ENCODE measurements at regions of chr17 and their contacts with region 1.

Region 1: DNA sequence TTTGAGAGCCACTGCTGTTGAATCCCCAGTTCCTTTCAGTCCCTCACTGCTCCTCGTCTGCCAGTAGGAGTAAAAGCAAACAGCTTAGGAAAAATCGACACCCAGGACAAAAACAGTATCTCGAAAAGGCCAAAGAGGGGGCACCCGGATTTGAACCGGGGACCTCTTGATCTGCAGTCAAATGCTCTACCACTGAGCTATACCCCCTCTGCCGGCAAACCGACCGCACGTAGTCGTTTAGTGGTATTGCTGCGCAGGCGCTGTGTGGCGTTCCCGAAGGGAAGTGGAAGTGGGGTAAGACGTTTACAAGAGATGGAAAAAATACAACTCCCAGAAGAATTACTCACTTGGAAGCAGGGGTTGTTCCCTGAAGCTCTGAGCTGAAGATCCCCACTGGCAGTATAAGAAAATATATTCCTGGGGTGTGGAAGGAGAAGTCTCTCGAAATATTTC is 2.2 kb upstream of the PLXDC1 start:
- DNase-seq: peak; percentile 85 to 95 (median 93)
- ATAC-seq: peak; percentile 77 to 91 (median 86)
- H3K4me3 ChIP-seq: peak overlapping the region; percentile 59 to 99 (median 76)
- H3K27ac ChIP-seq: peak overlapping the region; percentile 79 to 98 (median 92)
- H3K4me1 ChIP-seq: peaks cover 0 to 36% (median 15%) of the 10 kb centered on the region in 12 donors
- H3K27me3 ChIP-seq: peaks cover 0 to 24% (median 4%) of the 10 kb centered on the region in 9 donors
- CTCF ChIP-seq: peak in 8 of 12 donors; percentile 9 to 49 (median 29)
- POLR2A ChIP-seq: peak in 1 of 2 donors; percentile 8

Region 2: GRCh38 chr17:38752119-38752929 is 401.3 kb before region 1 on chr17 and contains the start of gene PSMB3:
- intact Hi-C with region 1: loop called in 1 of 10 experiments (anchors 5 kb)
- DNase-seq: peak; percentile 96 to 99 (median 98)
- ATAC-seq: peak; percentile 76 to 93 (median 88)
- H3K4me3 ChIP-seq: peak within 1 kb of the TSS; percentile 61 to 99 (median 94)
- H3K27ac ChIP-seq: peak within 1 kb of the TSS; percentile 37 to 99 (median 96)
- H3K4me1 ChIP-seq: peaks cover 0 to 62% (median 38%) of the 10 kb centered on the region in 12 donors
- H3K27me3 ChIP-seq: peaks cover 0 to 24% (median 0%) of the 10 kb centered on the region in 9 donors
- CTCF ChIP-seq: no peak
- POLR2A ChIP-seq: peak in 1 of 2 donors; percentile 51
- total RNA-seq, gene PSMB3: 145 to 305 (median 194) TPM

Region 3: GRCh38 chr17:38967290-38967738 is 186.3 kb before region 1 on chr17 and contains the start of gene FBXO47:
- intact Hi-C with region 1: loop called in 2 of 10 experiments (anchors 5 kb)
- DNase-seq: peak; percentile 92 to 97 (median 94)
- ATAC-seq: peak; percentile 96 to 100 (median 99)
- H3K4me3 ChIP-seq: peak within 1 kb of the TSS in 10 of 12 donors; percentile 3 to 57 (median 42)
- H3K27ac ChIP-seq: peak within 1 kb of the TSS in 11 of 12 donors; percentile 40 to 80 (median 72)
- H3K4me1 ChIP-seq: peaks cover 0 to 10% (median 0%) of the 10 kb centered on the region in 12 donors
- H3K27me3 ChIP-seq: no peaks in the 10 kb centered on the region
- CTCF ChIP-seq: peak in 9 of 12 donors; percentile 6 to 63 (median 33)
- POLR2A ChIP-seq: peak in 1 of 2 donors; percentile 68
- total RNA-seq, gene FBXO47: 0.11 TPM in 1 of 9 donors, not detected in the others

Region 4: GRCh38 chr17:39001703-39002637 is 151.7 kb before region 1 on chr17:
- intact Hi-C with region 1: loop called in 1 of 10 experiments (anchors 5 kb)
- DNase-seq: peak; percentile 85 to 93 (median 90)
- ATAC-seq: peak; percentile 91 to 96 (median 94)
- H3K4me3 ChIP-seq: peak overlapping the region in 9 of 12 donors; percentile 20 to 51 (median 30)
- H3K27ac ChIP-seq: peak overlapping the region; percentile 84 to 98 (median 94)
- H3K4me1 ChIP-seq: peaks cover 0 to 41% (median 21%) of the 10 kb centered on the region in 12 donors
- H3K27me3 ChIP-seq: no peaks in the 10 kb centered on the region
- CTCF ChIP-seq: peak in 1 of 12 donors; percentile 12
- POLR2A ChIP-seq: no peak

Region 5: GRCh38 chr17:39080421-39081078 is 73.1 kb before region 1 on chr17:
- intact Hi-C with region 1: loop called in 4 of 10 experiments (anchors 5 kb)
- DNase-seq: peak in 2 of 5 donors; percentile 44 to 71
- ATAC-seq: peak in 3 of 4 donors; percentile 34 to 69 (median 52)
- H3K4me3 ChIP-seq: no peak overlapping the region
- H3K27ac ChIP-seq: peak overlapping the region in 8 of 12 donors; percentile 25 to 89 (median 47)
- H3K4me1 ChIP-seq: peaks cover 0 to 48% (median 29%) of the 10 kb centered on the region in 12 donors
- H3K27me3 ChIP-seq: no peaks in the 10 kb centered on the region
- CTCF ChIP-seq: no peak
- POLR2A ChIP-seq: no peak

Region 6: GRCh38 chr17:39199820-39200069 is 46.1 kb after region 1 on chr17:
- intact Hi-C with region 1: no loop called
- DNase-seq: peak; percentile 90 to 94 (median 91)
- ATAC-seq: peak; percentile 70 to 92 (median 84)
- H3K4me3 ChIP-seq: peak overlapping the region; percentile 71 to 99 (median 82)
- H3K27ac ChIP-seq: peak overlapping the region; percentile 92 to 100 (median 98)
- H3K4me1 ChIP-seq: peaks cover 0 to 57% (median 33%) of the 10 kb centered on the region in 12 donors
- H3K27me3 ChIP-seq: no peaks in the 10 kb centered on the region
- CTCF ChIP-seq: no peak
- POLR2A ChIP-seq: no peak

Measured in heart left ventricle (tissue), 16 donors.